Spleen (tissue), 13 donors: ENCODE measurements at regions of chr1 and their contacts with region 1.

Region 1: GRCh38 chr1:205255941-205256780 is 28.4 kb downstream of the TMCC2 start:
- DNase-seq: peak; percentile 94
- H3K4me3 ChIP-seq: peak overlapping the region in 1 of 8 donors; percentile 17
- H3K27ac ChIP-seq: no peak overlapping the region
- H3K4me1 ChIP-seq: peaks cover 0 to 32% (median 14%) of the 10 kb centered on the region in 6 donors
- H3K27me3 ChIP-seq: no peaks in the 10 kb centered on the region
- CTCF ChIP-seq: peak; percentile 86 to 98 (median 95)
- POLR2A ChIP-seq: no peak

Region 2: GRCh38 chr1:204980840-204981405 is 275.2 kb before region 1 on chr1:
- intact Hi-C with region 1: loop called (anchors 5 kb)
- DNase-seq: no peak
- H3K4me3 ChIP-seq: no peak overlapping the region
- H3K27ac ChIP-seq: peak overlapping the region in 1 of 8 donors; percentile 8
- H3K4me1 ChIP-seq: peaks cover 0 to 28% (median 9%) of the 10 kb centered on the region in 6 donors
- H3K27me3 ChIP-seq: peaks cover 0 to 25% (median 0%) of the 10 kb centered on the region in 7 donors
- CTCF ChIP-seq: no peak
- POLR2A ChIP-seq: no peak